A549 (cell line): ENCODE measurements at regions of chr4 and their contacts with region 1.

Region 1: GRCh38 chr4:1693129-1693896 is 9.2 kb upstream of the FAM53A start:
- DNase-seq: peak; percentile 58 to 87
- ATAC-seq: peak; percentile 94 to 95
- H3K4me3 ChIP-seq: no peak overlapping the region
- H3K27ac ChIP-seq: no peak overlapping the region
- H3K4me1 ChIP-seq: no peaks in the 10 kb centered on the region
- CTCF ChIP-seq: peak; percentile 64
- EP300 ChIP-seq: no peak
- POLR2A ChIP-seq: no peak
- RAD21 ChIP-seq: peak; percentile 36 to 45

Region 2: GRCh38 chr4:1706358-1706757 is 13.0 kb after region 1 on chr4:
- CTCF ChIA-PET with region 1: interaction called, 39 read pairs
- POLR2A ChIA-PET with region 1: interaction called, 21 read pairs
- DNase-seq: no peak
- ATAC-seq: no peak
- H3K4me3 ChIP-seq: no peak overlapping the region
- H3K27ac ChIP-seq: no peak overlapping the region
- H3K4me1 ChIP-seq: peaks cover 25% of the 10 kb centered on the region; the same call in 2 of the 3 replicates
- CTCF ChIP-seq: no peak
- EP300 ChIP-seq: no peak
- POLR2A ChIP-seq: no peak
- RAD21 ChIP-seq: no peak

Region 3: DNA sequence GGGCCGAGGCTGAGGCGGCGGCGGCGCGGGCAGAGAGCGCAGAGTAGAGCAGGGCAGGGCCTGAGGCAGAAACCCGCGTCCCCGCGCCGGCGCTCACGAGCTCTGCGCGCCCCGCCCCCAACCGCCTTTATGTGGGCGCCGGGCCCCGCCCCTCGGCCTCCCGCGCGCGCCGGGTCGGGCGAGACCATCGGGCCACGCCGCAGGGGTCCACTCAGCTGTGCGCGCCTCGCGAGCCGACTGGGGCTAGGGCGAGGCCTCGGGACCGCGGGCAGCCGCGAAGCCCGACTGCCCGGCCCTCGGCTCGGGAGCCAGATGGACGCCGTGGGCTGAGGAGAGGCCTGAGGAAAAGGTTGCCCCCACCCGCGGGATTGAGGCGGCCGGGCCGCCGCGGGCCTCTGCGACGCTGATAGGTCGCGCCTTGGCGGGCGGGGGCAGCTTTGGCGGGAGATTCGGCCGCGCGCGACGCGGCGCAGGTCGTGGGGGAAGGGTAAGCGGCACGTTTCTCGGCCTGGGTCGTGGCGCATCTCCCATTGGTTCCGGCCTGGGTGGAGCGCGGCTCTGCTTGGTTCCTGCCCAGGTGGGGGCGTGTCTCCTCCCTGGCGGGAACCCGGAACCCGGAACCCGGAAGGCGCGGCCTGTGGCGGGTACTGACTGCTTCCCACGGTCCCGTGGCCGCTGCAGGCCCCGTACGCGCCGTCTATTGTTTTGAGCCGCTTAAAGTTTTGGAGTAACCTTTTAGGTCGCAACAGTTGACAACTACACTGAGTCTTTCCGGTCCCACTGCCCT is 19.1 kb after region 1 on chr4 and contains the start of gene SLBP:
- CTCF ChIA-PET with region 1: interaction called, 17 read pairs
- POLR2A ChIA-PET with region 1: interaction called, 21 read pairs
- DNase-seq: peak; percentile 92 to 97
- ATAC-seq: peak; percentile 86 to 92
- H3K4me3 ChIP-seq: peak within 1 kb of the TSS; percentile 85
- H3K27ac ChIP-seq: peak within 1 kb of the TSS; percentile 99 to 100
- H3K4me1 ChIP-seq: peaks cover 40% of the 10 kb centered on the region
- CTCF ChIP-seq: no peak
- EP300 ChIP-seq: no peak
- POLR2A ChIP-seq: peak; percentile 87
- RAD21 ChIP-seq: no peak
- polyA plus RNA-seq, gene SLBP: 66.7 and 89.9 TPM in 2 replicates

Region 4: DNA sequence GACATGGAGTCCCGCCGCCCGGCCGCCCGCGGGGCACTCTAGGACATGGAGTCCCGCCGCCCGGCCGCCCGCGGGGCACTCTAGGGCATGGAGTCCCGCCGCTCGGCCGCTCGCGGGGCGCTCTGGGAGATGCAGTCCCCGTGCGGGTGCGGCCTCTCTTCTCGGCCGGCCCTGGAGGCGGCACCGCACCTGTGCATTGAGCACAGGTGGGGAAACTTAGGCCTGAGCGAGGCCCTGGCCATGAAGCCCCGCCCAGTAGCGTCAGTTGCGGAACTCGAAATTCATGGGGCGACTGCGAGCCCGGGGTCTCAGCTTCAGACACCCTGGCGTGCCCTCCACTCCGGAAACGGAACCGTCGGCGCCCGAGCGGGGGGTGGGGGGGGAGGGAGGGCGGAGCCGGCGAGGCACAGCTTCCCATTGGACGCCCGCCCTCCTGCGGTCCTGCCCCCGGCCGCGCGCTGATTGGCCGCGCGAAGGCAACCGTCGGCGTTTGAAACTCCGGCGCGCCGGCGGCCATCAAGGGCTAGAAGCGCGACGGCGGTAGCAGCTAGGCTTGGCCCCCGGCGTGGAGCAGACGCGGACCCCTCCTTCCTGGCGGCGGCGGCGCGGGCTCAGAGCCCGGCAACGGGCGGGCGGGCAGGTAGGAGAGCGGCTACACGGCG is 27.8 kb after region 1 on chr4 and contains the starts of genes TACC3 and TMEM129:
- CTCF ChIA-PET with region 1: interaction called, 108 read pairs
- POLR2A ChIA-PET with region 1: interaction called, 5 read pairs
- DNase-seq: peak; percentile 87 to 90
- ATAC-seq: peak; percentile 82 to 83
- H3K4me3 ChIP-seq: peak within 1 kb of the TSS; percentile 89
- H3K27ac ChIP-seq: peak within 1 kb of the TSS; percentile 93 to 99
- H3K4me1 ChIP-seq: peaks cover 22% of the 10 kb centered on the region; the same call in 2 of the 3 replicates
- CTCF ChIP-seq: no peak
- EP300 ChIP-seq: no peak
- POLR2A ChIP-seq: peak; percentile 53
- RAD21 ChIP-seq: no peak
- polyA plus RNA-seq, gene TACC3: 25.9 and 31.4 TPM in 2 replicates
- polyA plus RNA-seq, gene TMEM129: 12.7 and 15.5 TPM in 2 replicates

Region 5: DNA sequence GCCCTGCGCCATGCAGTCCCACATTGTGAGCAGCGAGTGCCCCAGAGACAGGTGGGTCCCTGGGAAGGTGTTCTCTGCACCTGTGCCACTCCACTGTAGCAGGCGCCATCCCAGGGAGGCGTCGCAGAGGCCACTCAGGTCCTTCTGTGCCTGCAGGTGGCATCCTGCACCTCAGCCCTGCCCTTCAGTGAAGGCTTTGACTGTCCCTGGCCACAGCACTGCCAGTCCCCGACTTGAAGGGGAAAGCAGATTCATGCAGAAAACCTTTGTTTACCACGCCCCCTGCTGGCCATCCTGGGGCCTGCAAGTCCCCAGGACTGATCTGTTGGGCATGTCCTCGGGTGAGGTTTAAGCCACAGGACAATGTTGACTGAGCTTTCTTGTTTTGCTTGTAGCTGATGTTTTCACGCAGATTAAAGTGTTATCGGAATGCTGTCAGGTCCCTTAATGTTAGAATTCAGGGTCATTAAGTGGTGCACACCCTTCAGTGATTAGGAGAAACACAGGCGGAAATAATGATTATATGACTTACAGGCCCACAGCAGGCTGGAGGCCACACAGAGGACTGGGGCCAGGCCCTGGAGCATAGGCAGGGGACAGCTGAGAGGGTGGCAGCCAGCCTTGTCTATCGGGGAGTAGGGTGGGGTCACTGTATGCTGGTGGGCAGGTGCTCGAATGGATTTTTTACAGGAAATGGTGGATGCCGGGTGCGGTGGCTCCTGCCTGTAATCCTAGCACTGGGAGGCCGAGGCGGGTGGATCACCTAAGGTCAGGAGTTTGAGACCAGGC is 33.0 kb after region 1 on chr4:
- CTCF ChIA-PET with region 1: interaction called, 108 read pairs
- POLR2A ChIA-PET with region 1: interaction called, 5 read pairs
- DNase-seq: peak; percentile 69 to 84
- ATAC-seq: peak; percentile 58 to 66
- H3K4me3 ChIP-seq: no peak overlapping the region
- H3K27ac ChIP-seq: peak overlapping the region; percentile 84 to 92
- H3K4me1 ChIP-seq: peaks cover 52% of the 10 kb centered on the region
- CTCF ChIP-seq: peak; percentile 82
- EP300 ChIP-seq: no peak
- POLR2A ChIP-seq: no peak
- RAD21 ChIP-seq: peak; percentile 42 to 43; a peak in 4 of 5 replicates

Region 6: GRCh38 chr4:2647403-2648158 is 954.3 kb after region 1 on chr4:
- CTCF ChIA-PET with region 1: no interaction called
- POLR2A ChIA-PET with region 1: no interaction called
- DNase-seq: no peak
- ATAC-seq: no peak
- H3K4me3 ChIP-seq: no peak overlapping the region
- H3K27ac ChIP-seq: no peak overlapping the region
- H3K4me1 ChIP-seq: no peaks in the 10 kb centered on the region
- CTCF ChIP-seq: no peak
- EP300 ChIP-seq: no peak
- POLR2A ChIP-seq: no peak
- RAD21 ChIP-seq: no peak